ENCODE measurements at regions of chr1 and their contacts with region 1.

Region 1: GRCh38 chr1:203625628-203626019 is 1.0 kb upstream of the ATP2B4 start:
- DNase-seq: peak; percentile 79
- ATAC-seq: peak; percentile 38
- H3K4me3 Mint-ChIP-seq: peak overlapping the region; percentile 90
- H3K27ac Mint-ChIP-seq: peak overlapping the region; percentile 71
- H3K4me1 Mint-ChIP-seq: peaks cover 61% of the 10 kb centered on the region
- H3K27me3 Mint-ChIP-seq: no peaks in the 10 kb centered on the region

Region 2: DNA sequence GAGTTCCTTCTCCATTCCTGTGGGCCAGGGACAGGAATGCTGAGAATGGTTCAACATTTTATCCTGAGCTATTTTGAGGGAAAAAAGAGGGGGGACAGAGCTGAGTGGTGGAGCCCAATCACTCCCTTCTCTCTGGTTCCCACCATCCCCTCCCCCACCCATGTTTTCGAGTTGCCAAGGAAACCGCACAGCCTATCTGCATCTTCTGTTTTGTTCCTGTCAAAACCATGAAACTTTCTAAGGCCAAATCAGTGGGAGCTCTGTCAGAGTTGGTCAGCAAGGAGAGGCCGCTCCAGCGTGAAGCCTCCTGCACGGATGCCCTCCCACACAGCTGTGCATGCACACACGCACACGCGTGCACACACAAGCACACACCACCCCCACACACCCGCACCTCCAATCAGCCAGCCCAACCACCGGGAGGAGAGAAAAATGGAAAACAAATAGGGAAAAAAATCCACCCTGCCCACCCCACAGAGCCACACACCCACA is 53.4 kb before region 1 on chr1:
- CTCF ChIA-PET with region 1: no interaction called
- POLR2A ChIA-PET with region 1: no interaction called
- DNase-seq: no peak
- ATAC-seq: no peak
- H3K4me3 Mint-ChIP-seq: no peak overlapping the region
- H3K27ac Mint-ChIP-seq: no peak overlapping the region
- H3K4me1 Mint-ChIP-seq: no peaks in the 10 kb centered on the region
- H3K27me3 Mint-ChIP-seq: peaks cover 7% of the 10 kb centered on the region

Region 3: DNA sequence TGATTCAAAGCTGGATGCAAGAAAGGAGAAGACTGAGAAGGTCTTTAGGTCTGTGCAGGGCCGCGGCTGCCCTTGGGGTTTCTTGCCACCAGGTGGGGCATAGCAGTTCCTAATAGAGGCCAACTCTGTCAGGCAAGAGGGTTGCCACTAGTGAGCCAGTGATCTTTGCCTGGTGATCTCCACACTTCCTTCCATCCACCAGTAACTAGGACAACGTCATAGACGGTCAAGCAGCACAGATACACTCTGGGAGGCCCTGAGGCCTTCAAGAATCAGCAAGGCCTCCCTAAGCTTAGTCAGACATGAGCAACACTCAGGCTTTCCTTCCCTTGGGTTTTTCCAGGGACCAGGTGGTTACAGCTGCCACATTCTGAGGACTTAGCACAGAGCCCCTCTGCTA is 31.9 kb before region 1 on chr1:
- CTCF ChIA-PET with region 1: interaction called, 23 read pairs
- POLR2A ChIA-PET with region 1: interaction called, 5 read pairs
- DNase-seq: peak; percentile 70
- ATAC-seq: peak; percentile 88
- H3K4me3 Mint-ChIP-seq: no peak overlapping the region
- H3K27ac Mint-ChIP-seq: peak overlapping the region; percentile 51
- H3K4me1 Mint-ChIP-seq: peaks cover 31% of the 10 kb centered on the region
- H3K27me3 Mint-ChIP-seq: peaks cover 7% of the 10 kb centered on the region

Region 4: DNA sequence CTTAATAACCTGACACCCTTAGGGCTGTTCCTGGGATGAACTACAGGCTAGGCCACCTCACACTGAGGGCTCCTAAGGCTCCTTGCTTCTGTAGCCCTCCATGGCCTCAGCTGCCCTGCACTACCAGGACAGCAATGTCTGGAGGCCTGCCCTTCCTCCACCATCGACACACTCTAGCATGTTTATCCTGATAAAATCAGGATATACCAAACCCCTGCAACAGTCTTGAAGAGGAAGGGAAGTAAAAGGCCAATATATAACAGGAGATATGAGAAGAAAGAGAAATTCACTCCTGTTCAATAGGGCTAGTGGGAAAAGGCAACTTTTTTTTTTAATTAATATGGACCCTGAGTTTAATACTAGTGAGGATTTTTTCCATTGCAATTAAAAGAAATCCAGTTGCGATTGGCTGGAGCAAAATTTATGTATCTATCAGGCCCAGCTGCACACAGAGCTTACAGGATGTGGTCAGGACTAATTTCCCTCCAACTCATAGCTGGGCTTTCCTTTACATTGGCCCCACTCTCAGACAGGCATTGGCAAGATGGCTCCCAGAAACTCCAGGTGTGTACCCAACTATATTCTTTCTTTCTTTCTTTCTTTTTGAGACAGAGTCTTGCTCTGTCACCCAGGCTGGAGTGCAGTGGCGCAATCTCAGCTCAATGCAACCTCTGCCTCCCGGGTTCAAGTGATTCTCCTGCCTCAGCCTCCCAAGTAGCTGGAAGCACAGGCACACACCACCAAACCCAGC is 12.5 kb before region 1 on chr1:
- CTCF ChIA-PET with region 1: interaction called, 27 read pairs
- POLR2A ChIA-PET with region 1: interaction called, 7 read pairs
- DNase-seq: peak; percentile 51
- ATAC-seq: peak; percentile 76
- H3K4me3 Mint-ChIP-seq: peak overlapping the region; percentile 48
- H3K27ac Mint-ChIP-seq: peak overlapping the region; percentile 79
- H3K4me1 Mint-ChIP-seq: peaks cover 61% of the 10 kb centered on the region
- H3K27me3 Mint-ChIP-seq: no peaks in the 10 kb centered on the region

Region 5: GRCh38 chr1:203673550-203674427 is 48.2 kb after region 1 on chr1:
- CTCF ChIA-PET with region 1: interaction called, 80 read pairs
- POLR2A ChIA-PET with region 1: interaction called, 18 read pairs
- DNase-seq: peak; percentile 89
- ATAC-seq: peak; percentile 92
- H3K4me3 Mint-ChIP-seq: peak overlapping the region; percentile 63
- H3K27ac Mint-ChIP-seq: peak overlapping the region; percentile 93
- H3K4me1 Mint-ChIP-seq: peaks cover 60% of the 10 kb centered on the region
- H3K27me3 Mint-ChIP-seq: no peaks in the 10 kb centered on the region

Region 6: DNA sequence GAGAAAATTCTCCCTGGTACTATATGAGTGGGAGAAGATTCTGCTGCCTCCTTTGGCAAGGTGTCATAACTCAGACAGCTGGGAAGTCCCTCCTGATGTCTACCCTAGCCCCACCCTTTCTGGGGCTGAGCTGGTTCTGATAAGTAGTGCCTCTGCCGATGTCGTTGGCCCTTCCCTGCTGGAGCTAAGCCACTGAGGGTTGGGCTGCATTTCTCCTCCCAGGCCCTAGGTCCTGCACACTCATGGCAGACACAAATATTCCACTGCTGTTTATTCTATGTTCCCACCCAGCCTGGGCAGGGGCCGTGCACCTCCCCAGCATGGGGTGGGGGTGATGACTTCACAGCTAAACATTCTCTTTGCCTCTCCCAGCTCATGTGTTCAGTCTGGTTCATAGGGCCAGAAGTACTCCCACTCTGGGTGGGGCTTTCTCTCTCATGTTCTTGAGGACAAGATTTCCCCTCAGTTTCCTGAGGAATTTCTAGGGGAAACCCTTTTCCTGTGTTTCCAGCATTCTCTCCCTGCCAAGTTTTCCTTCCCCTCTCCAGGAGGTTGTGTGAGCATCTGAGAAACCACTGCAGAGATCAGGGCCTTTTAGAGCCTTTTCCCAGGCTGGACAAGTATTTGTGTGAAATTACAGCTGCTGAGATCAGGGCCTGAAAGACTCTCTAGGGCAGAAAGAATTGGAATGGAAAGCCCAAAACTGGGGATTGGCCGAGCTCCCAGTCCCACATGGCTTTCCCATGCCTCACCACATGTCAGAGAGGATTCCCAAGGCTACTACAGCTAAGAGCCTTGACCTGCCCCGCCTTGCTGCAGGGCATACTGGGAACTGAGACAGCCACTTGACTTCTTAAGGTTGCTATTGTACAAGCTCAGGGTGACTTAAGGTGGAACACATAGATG is 67.2 kb after region 1 on chr1:
- CTCF ChIA-PET with region 1: interaction called, 114 read pairs
- POLR2A ChIA-PET with region 1: interaction called, 3 read pairs
- DNase-seq: no peak
- ATAC-seq: no peak
- H3K4me3 Mint-ChIP-seq: no peak overlapping the region
- H3K27ac Mint-ChIP-seq: peak overlapping the region; percentile 56
- H3K4me1 Mint-ChIP-seq: peaks cover 19% of the 10 kb centered on the region
- H3K27me3 Mint-ChIP-seq: no peaks in the 10 kb centered on the region

Region 7: DNA sequence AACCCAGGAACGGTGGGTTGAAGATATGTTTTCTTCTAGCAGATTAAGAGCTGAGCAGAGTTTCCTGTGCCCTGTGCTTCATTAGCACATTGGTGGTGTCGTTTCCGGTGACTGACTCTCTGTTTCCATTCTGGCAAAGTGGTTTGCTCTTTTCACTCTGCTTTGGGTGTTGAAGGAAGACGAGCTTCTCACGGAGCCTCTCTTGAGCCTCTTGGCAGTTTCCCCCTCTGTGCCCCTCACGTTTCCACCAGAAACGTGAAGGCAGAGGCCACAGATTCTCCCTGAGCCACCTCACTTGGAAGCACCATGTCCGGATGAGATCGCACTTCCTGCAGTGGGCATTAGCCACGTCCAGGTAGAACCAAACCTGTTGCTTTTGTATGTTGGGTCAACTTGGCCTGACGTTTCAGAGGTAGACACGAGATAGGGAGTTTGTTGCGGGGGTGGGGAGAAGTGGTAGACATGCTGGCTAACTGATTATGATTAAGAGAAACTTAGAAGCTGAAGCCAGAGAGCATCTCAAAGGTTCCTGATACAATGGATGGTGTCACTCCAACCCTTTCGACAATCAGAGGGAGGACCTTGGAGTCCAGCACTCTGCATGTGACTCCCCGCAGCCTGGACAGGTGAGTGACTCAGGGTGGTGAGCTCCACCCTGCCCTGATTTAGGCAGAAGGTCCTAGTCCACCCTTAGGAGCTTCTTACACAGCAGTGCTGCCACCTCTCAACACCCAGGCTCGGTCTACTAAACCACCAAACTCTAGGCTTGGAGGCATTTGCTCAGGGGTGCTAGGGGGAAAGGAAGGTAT is 139.6 kb after region 1 on chr1 and contains the start of gene LAX1:
- CTCF ChIA-PET with region 1: interaction called, 6 read pairs
- POLR2A ChIA-PET with region 1: interaction called, 11 read pairs
- DNase-seq: peak; percentile 90
- ATAC-seq: peak; percentile 86
- H3K4me3 Mint-ChIP-seq: peak within 1 kb of the TSS; percentile 90
- H3K27ac Mint-ChIP-seq: peak within 1 kb of the TSS; percentile 99
- H3K4me1 Mint-ChIP-seq: peaks cover 50% of the 10 kb centered on the region
- H3K27me3 Mint-ChIP-seq: no peaks in the 10 kb centered on the region
- total RNA-seq, gene LAX1: 14.5 to 15.5 TPM

Measured in activated CD8-positive, alpha-beta T cell treated with anti-CD3 and anti-CD28 coated beads, Interleukin-2, amount 10 ng/mL, durations not matched to agents 7 days and 5 days (primary cell).